ENCODE measurements at regions of chr14 and their contacts with region 1.

Region 1: GRCh38 chr14:69611201-69612011 is at the start of gene SUSD6:
- DNase-seq: peak; percentile 78 to 93 (median 85)
- ATAC-seq: peak; percentile 79 to 82 (median 80)
- H3K4me3 ChIP-seq: peak within 1 kb of the TSS; percentile 70 to 78
- H3K4me3 Mint-ChIP-seq: peak within 1 kb of the TSS; percentile 94 to 97 (median 97)
- H3K27ac ChIP-seq: peak within 1 kb of the TSS; percentile 86
- H3K27ac Mint-ChIP-seq: peak within 1 kb of the TSS; percentile 97 to 100
- H3K4me1 ChIP-seq: peaks cover 45 to 54% of the 10 kb centered on the region in 2 experiments
- H3K4me1 Mint-ChIP-seq: peaks cover 59 to 63% (median 61%) of the 10 kb centered on the region in 3 donors
- H3K27me3 ChIP-seq: no peaks in the 10 kb centered on the region
- H3K27me3 Mint-ChIP-seq: no peaks in the 10 kb centered on the region
- total RNA-seq, gene SUSD6: 53.5 to 75.5 (median 60.4) TPM

Region 2: DNA sequence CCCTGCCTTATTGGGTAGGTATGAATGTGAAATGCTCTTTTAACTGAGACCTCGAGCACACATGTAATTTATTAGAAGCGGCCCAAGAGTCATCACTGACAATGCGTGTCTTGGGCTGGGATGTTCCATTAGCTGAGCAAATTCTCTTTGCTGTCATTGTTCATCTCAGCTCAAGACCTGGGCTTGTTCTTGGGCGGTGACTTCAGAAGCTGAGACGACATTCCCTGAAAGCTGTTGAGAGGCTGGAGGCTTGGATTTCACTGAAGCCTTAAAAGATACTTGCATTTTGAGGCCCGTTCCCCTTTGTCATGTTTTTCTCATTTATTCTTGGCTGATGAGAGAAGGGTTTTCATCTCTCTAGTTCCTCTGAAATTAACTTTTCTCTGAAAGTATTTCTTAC is 16.6 kb before region 1 on chr14:
- CTCF ChIA-PET with region 1: no interaction called
- POLR2A ChIA-PET with region 1: no interaction called
- DNase-seq: no peak
- ATAC-seq: no peak
- H3K4me3 ChIP-seq: no peak overlapping the region
- H3K4me3 Mint-ChIP-seq: no peak overlapping the region
- H3K27ac ChIP-seq: no peak overlapping the region
- H3K27ac Mint-ChIP-seq: no peak overlapping the region
- H3K4me1 ChIP-seq: no peaks in the 10 kb centered on the region
- H3K4me1 Mint-ChIP-seq: no peaks in the 10 kb centered on the region
- H3K27me3 ChIP-seq: peaks cover 0 to 6% of the 10 kb centered on the region in 2 experiments
- H3K27me3 Mint-ChIP-seq: peaks cover 0 to 5% of the 10 kb centered on the region in 2 donors

Region 3: GRCh38 chr14:69766984-69767368 is 155.6 kb after region 1 on chr14 and contains the start of gene SRSF5:
- CTCF ChIA-PET with region 1: no interaction called
- POLR2A ChIA-PET with region 1: interaction called, 3 to 15 read pairs
- DNase-seq: peak; percentile 84 to 97 (median 92)
- ATAC-seq: peak; percentile 84 to 87 (median 87)
- H3K4me3 ChIP-seq: peak within 1 kb of the TSS; percentile 100
- H3K4me3 Mint-ChIP-seq: peak within 1 kb of the TSS; percentile 99
- H3K27ac ChIP-seq: peak within 1 kb of the TSS; percentile 100
- H3K27ac Mint-ChIP-seq: peak within 1 kb of the TSS; percentile 100
- H3K4me1 ChIP-seq: peaks cover 36 to 46% of the 10 kb centered on the region in 2 experiments
- H3K4me1 Mint-ChIP-seq: peaks cover 66 to 70% (median 68%) of the 10 kb centered on the region in 3 donors
- H3K27me3 ChIP-seq: no peaks in the 10 kb centered on the region
- H3K27me3 Mint-ChIP-seq: peaks cover 0 to 2% of the 10 kb centered on the region in 2 donors
- total RNA-seq, gene SRSF5: 788 to 1,543 (median 848) TPM

Region 4: DNA sequence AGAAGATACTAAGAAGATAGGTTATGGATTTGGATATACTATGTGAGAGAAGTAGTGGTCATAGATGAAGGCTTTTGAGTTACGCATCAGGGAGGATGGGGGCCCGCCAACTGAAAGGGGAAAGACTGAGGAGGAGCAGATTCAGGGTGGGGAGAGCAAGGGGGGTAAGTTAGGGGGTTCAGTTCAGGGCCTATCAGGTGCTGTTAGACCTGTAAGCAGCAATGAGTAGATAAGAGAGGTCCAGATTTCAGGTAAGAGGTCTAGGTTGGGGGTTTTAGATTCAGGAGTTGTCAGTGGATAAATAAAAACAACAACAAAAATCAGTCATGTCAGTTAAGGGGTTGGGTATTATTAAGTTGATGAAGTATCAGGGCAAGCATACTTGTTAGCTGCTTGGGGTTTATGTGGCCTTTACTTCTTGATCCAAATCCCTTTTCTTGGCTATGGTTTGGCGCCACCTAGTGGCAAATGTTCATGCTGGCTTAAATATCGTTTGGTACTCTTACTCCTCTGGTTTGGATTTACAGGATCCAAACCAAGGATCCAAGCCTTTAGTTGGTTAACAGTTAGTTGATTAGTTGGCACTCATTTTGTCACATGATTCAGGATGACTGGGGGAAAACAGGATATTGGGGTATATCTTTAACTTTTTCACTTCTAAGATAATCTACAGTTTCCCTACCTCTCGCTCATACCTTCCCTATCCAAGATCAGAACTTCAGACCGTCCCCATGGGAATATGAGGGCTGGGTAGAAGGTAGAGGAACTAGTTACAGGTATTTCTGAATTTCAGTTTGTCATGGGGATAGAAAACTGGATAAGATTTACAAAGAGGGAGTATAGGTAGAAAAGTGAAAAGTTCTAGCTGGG is 1360.9 kb after region 1 on chr14:
- CTCF ChIA-PET with region 1: no interaction called
- POLR2A ChIA-PET with region 1: interaction called in 1 of 2 experiments, 11 read pairs
- DNase-seq: peak; percentile 57 to 93 (median 79)
- ATAC-seq: peak; percentile 76 to 84 (median 82)
- H3K4me3 ChIP-seq: no peak overlapping the region
- H3K4me3 Mint-ChIP-seq: no peak overlapping the region
- H3K27ac ChIP-seq: no peak overlapping the region
- H3K27ac Mint-ChIP-seq: peak overlapping the region; percentile 63 to 66
- H3K4me1 ChIP-seq: peaks cover 4 to 6% of the 10 kb centered on the region in 2 experiments
- H3K4me1 Mint-ChIP-seq: peaks cover 50 to 61% (median 58%) of the 10 kb centered on the region in 3 donors
- H3K27me3 ChIP-seq: no peaks in the 10 kb centered on the region
- H3K27me3 Mint-ChIP-seq: no peaks in the 10 kb centered on the region